ENCODE measurements at regions of chr7 and their contacts with region 1.

Region 1: DNA sequence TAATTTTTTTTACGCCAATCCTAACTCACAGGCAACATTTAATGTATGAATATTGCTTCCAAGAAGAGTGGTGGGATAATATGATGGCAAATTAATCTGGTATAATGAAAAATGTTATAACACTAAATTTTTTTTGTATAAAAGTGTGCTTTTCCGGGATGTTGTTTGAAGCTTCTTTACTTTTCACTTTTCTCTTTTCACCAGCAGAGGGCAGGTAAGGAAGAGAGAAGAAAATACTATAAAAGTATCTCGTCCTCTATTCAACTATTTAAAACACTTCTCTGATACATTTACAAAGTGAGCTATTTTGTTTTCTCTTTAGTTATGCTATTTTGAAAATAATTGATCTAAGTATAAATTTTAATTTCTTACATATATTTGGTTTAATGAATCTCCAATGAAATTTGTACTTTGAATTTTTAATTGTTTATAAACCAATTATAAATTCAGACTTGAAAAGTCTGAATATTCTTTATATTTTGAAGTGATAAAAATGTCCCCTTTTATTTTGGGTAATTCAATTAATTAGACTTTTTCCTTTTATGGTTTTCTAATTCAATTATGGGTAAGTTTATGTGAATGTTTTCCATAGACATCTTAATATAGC is 20.7 kb upstream of the CFTR start:
- DNase-seq: no peak
- ATAC-seq: no peak

Region 2: GRCh38 chr7:117530390-117530789 is 71.3 kb after region 1 on chr7:
- intact Hi-C with region 1: no loop called
- DNase-seq: no peak
- ATAC-seq: no peak

Region 3: GRCh38 chr7:117562734-117563133 is 103.7 kb after region 1 on chr7:
- intact Hi-C with region 1: no loop called
- DNase-seq: no peak
- ATAC-seq: no peak

Region 4: GRCh38 chr7:117715784-117716445 is 256.8 kb after region 1 on chr7:
- intact Hi-C with region 1: loop called (anchors 5 kb)
- DNase-seq: no peak
- ATAC-seq: peak; percentile 77

Region 5: DNA sequence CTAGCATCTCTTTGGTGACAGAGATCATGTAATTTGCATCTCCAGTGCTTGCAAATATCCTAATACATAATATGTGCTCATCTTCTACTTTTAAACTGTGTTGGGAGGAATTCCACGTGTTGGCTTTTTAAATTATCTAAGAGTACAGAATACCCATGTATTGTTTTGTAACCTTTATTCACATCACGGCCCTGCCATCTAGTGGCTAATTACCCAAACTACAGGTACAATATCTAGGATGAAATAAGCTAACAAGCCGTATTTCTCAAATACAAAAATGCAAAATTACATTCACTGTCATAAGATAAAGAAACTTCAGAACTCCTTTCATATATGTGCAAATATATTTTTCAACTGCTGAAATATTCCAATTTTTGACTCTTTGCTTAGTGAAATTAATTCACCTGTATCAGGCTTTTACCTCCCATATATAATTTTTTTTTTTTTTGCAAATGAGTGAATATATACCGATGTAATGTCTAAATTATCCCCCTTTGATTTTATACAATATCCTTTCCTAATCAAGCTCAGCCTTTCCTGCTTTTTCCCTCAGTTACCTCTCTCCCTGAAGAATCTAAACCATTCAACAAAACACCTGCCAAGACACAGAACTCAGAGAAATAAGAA is 694.6 kb after region 1 on chr7:
- intact Hi-C with region 1: loop called (anchors 10 kb)
- DNase-seq: no peak
- ATAC-seq: peak; percentile 61

Measured in Right ventricle myocardium superior (tissue), 1 donor.